ENCODE measurements at regions of chr2 and their contacts with region 1.

Region 1: DNA sequence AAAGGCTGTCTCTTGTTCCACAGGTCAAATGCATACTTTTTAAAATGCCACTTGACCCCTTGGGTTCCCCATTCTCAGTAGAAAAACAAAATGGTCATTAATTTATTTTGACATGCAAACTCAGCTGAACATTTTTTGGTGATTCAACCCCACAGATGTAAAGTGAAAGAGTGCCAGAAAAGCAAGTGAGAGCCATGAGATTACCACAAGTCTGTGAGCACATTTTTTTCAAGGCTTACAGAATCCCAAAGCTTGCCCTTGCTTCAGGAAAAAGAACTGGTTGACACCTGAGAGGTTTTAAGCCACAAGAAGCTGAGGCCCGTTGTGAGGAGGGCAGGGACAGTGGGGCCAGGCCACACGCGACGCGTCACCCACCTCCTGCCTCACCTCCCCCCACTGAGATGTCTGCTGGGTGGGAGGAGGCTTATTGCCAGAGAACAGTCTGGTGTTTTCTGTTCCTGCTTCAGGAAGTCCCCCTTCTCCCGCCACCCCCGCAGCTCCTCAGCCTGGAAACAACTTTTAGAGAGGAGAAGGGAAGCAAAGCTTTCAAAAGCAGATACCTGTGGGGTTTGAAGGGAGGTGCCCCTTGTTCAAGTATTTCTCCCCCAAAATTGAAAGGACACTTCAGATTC is 70.4 kb upstream of the CYP1B1 start:
- DNase-seq: peak; percentile 21
- H3K4me3 ChIP-seq: no peak overlapping the region
- H3K27ac ChIP-seq: no peak overlapping the region
- H3K4me1 ChIP-seq: no peaks in the 10 kb centered on the region
- H3K27me3 ChIP-seq: no peaks in the 10 kb centered on the region
- CTCF ChIP-seq: no peak

Region 2: DNA sequence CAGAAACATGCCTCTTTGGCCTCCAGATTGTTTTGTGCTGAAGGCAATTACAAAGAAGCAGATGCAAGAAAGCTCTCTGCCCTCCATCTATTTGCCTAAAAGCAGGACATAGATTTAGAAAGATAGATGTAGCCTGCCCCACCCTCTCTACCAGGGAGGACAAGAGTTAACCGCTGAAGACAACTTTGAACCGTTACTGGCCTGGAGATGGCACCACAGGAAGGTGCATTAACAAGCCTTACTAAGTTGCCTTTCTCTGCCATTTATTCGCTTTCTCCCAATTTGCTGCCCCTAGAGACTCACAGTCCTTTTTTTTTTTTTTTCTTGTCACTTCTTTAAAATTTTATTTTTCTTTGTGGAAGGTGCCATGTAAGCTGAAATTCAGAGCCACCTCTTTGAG is 250.1 kb before region 1 on chr2:
- CTCF ChIA-PET with region 1: interaction called, 10 read pairs
- POLR2A ChIA-PET with region 1: no interaction called
- intact Hi-C with region 1: no loop called
- DNase-seq: peak; percentile 27
- H3K4me3 ChIP-seq: no peak overlapping the region
- H3K27ac ChIP-seq: no peak overlapping the region
- H3K4me1 ChIP-seq: no peaks in the 10 kb centered on the region
- H3K27me3 ChIP-seq: no peaks in the 10 kb centered on the region
- CTCF ChIP-seq: peak; percentile 28; the same call in 1 of the 2 replicates

Measured in A673 (cell line).